Activated T-helper 2 cell treated with anti-CD3 and anti-CD28 coated beads, Interferon-gamma antibody, Interleukin-2, Interleukin-4, amounts not matched to agents 10 μg/mL and 5 μg/mL and 100 μg/mL, durations not matched to agents 14 hours and 24 hours and 36 hours (primary cell): ENCODE measurements at regions of chr2 and their contacts with region 1.

Region 1: GRCh38 chr2:26088032-26088643 is 54.3 kb downstream of the RAB10 start:
- DNase-seq: no peak
- H3K4me3 Mint-ChIP-seq: no peak overlapping the region
- H3K27ac Mint-ChIP-seq: no peak overlapping the region
- H3K4me1 Mint-ChIP-seq: peaks cover 34% of the 10 kb centered on the region
- H3K27me3 Mint-ChIP-seq: no peaks in the 10 kb centered on the region

Region 2: GRCh38 chr2:26068602-26069298 is 19.4 kb before region 1 on chr2:
- intact Hi-C with region 1: loop called (anchors 1 kb)
- DNase-seq: peak; percentile 53
- H3K4me3 Mint-ChIP-seq: peak overlapping the region; percentile 27
- H3K27ac Mint-ChIP-seq: peak overlapping the region; percentile 93
- H3K4me1 Mint-ChIP-seq: peaks cover 53% of the 10 kb centered on the region
- H3K27me3 Mint-ChIP-seq: no peaks in the 10 kb centered on the region

Region 3: GRCh38 chr2:26144953-26145680 is 57.0 kb after region 1 on chr2:
- intact Hi-C with region 1: loop called (anchors 1 kb)
- DNase-seq: peak; percentile 44
- H3K4me3 Mint-ChIP-seq: no peak overlapping the region
- H3K27ac Mint-ChIP-seq: no peak overlapping the region
- H3K4me1 Mint-ChIP-seq: peaks cover 3% of the 10 kb centered on the region
- H3K27me3 Mint-ChIP-seq: peaks cover 11% of the 10 kb centered on the region